PC-3 (cell line): ENCODE measurements at regions of chr2 and their contacts with region 1.

Region 1: GRCh38 chr2:201130524-201131186 is 14.7 kb downstream of the CFLAR start:
- DNase-seq: peak; percentile 88
- ATAC-seq: peak; percentile 97
- H3K4me3 ChIP-seq: no peak overlapping the region
- H3K27ac ChIP-seq: peak overlapping the region; percentile 79
- H3K4me1 ChIP-seq: peaks cover 27% of the 10 kb centered on the region
- H3K27me3 ChIP-seq: no peaks in the 10 kb centered on the region
- CTCF ChIP-seq: no peak

Region 2: DNA sequence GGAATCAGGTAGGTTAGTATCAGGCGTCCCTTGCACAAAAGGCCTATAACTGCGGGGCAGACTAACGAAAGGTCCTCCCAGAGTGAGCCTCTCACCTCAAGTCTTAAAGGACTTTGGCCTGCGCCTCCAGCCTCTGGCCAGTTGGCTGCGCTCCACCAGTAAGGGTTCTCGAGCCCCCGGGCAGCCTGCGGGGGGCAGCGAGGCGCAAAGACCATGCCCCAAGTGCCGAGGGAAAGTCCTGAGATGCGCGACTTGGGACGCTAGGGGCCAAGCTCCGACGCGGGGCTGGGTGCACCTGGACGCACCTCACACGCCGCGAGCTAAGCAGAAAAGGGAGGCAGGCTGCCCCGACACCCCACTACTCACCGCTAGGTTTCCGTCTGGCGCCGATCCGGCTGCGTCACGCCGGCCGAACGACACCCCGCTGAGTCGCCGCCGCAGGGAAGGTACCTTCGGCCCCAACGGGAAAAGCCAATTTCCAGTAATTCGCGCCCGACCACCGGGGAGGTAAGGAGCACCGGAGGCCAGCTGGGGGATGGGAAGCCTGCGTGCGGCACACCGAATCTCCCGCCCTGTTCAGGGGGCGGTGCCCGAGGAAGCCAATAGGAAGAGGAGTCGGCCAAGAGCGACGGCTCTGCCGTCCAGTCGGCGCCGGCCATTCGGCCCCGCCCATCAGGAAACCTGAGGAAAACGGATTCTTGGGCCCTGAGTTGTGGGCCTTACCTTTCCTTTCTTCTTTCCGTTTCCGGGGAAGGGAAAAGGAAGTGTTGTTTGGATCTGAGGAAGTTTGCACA is 167.3 kb before region 1 on chr2 and contains the start of gene ORC2:
- CTCF ChIA-PET with region 1: no interaction called
- POLR2A ChIA-PET with region 1: no interaction called
- intact Hi-C with region 1: no loop called
- DNase-seq: peak; percentile 99
- ATAC-seq: peak; percentile 93
- H3K4me3 ChIP-seq: peak within 1 kb of the TSS; percentile 81
- H3K27ac ChIP-seq: peak within 1 kb of the TSS; percentile 58
- H3K4me1 ChIP-seq: peaks cover 55% of the 10 kb centered on the region
- H3K27me3 ChIP-seq: no peaks in the 10 kb centered on the region
- CTCF ChIP-seq: peak; percentile 68
- total RNA-seq, gene ORC2: 17.7 and 25.9 TPM in 2 replicates

Region 3: DNA sequence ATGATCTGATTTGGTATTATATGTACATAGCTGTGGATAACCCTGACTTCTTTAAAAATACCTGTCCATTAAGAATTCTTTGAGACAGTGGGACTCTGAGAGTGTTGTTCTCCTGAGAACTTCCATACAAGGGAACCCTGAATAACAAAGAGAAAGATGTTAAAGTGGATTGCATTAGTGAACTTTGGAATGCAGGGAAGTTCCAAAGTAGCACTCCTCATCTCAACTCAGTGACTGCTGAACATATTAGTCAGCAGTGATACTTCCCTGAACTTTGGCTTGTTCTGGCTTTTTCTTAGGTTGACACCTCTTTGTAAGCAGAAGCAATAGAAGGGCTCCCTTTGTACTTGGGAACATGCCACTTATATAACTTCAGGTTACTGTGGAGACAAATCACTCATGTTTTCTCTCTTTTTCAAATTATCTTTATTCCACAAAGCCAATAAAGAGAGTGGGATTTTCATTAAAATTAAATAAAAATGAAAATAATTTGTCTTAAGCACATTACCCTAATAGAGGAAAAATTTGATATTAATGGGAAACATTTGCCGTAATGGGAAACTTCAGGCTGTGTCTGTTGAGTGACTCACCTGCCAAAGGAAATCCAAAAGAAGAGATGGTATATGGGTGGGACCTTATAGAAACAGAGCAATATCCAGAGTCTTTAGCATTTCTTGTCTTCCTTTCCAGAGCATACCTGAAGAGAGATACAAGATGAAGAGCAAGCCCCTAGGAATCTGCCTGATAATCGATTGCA is 18.6 kb after region 1 on chr2:
- CTCF ChIA-PET with region 1: no interaction called
- POLR2A ChIA-PET with region 1: no interaction called
- intact Hi-C with region 1: loop called (anchors 2 kb)
- DNase-seq: peak; percentile 94
- ATAC-seq: peak; percentile 68
- H3K4me3 ChIP-seq: peak overlapping the region; percentile 52
- H3K27ac ChIP-seq: peak overlapping the region; percentile 89
- H3K4me1 ChIP-seq: peaks cover 46% of the 10 kb centered on the region
- H3K27me3 ChIP-seq: no peaks in the 10 kb centered on the region
- CTCF ChIP-seq: no peak